AG04449 (cell line): ENCODE measurements at regions of chr3 and their contacts with region 1.

Region 1: DNA sequence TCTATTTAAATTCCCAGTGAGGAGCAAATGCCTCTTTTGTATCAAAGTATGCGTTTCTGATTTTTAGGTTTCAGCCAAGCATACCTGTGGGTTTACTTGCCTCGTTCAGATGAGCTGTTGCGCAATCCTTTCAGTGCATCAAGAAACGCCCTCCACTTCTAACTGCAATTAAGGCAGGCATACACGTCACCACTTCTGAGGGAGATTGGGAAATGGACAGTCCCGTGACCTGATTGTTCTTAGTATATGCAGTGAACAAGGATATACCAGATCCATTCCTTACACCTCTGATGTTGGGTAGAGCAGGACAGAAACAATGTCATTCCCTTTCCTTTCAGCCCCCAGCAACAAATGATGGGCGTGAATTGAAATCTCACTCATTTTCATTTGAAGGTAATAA is 219.0 kb downstream of the ITPR1 start:
- DNase-seq: no peak
- H3K4me3 ChIP-seq: no peak overlapping the region
- CTCF ChIP-seq: no peak

Region 2: GRCh38 chr3:4656059-4656458 is 56.1 kb before region 1 on chr3:
- CTCF ChIA-PET with region 1: interaction called, 14 read pairs
- POLR2A ChIA-PET with region 1: no interaction called
- DNase-seq: no peak
- H3K4me3 ChIP-seq: no peak overlapping the region
- CTCF ChIP-seq: peak; percentile 94

Region 3: GRCh38 chr3:4693620-4694019 is 18.5 kb before region 1 on chr3:
- CTCF ChIA-PET with region 1: interaction called, 20 read pairs
- POLR2A ChIA-PET with region 1: no interaction called
- DNase-seq: no peak
- H3K4me3 ChIP-seq: no peak overlapping the region
- CTCF ChIP-seq: no peak

Region 4: GRCh38 chr3:4826237-4827100 is 114.3 kb after region 1 on chr3:
- CTCF ChIA-PET with region 1: interaction called, 10 read pairs
- POLR2A ChIA-PET with region 1: no interaction called
- DNase-seq: no peak
- H3K4me3 ChIP-seq: no peak overlapping the region
- CTCF ChIP-seq: no peak

Region 5: DNA sequence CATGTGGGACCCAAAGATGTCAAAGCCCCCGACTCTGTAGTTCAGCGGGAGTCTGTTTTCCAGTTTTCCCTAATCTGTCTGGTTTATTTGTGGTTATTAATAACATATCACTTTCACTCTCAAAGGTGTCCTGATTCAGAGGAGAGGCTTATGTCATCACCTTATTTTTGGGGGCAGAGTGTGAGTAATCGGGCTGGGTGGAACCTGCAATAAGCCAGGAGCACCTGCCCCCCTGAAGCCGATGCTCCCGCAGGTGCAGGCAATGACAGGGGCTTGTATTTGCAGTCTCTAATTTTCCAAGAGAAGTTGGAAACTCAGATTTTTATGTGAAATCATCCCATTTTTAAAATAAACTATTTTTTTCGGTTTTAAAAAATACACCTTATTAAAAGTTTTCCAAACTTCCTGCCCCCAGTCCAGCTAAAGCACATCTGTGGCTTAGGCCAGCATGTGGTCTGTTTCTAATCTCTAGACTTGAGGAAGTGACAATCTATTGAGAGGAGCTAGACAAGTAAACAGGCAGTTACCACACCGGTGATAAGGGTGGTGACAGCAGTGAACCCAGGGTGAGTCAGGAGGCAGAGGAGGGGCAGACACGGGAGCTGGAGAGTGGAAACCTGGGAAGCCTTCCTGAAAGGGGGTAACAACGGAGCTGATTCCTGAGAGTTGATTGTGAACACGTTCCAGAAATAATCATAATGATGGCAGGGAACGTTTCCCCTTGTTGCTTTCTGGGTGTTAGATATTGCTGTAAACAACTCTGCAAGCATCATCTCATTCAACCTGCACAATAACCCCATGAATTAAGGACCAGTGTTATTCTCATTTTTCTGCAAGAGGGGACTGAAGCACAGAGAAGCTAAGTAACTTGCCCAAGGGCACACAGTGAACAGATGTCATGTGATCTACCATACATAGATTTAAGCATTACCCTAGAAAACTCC is 304.3 kb after region 1 on chr3:
- CTCF ChIA-PET with region 1: interaction called, 215 read pairs
- POLR2A ChIA-PET with region 1: no interaction called
- DNase-seq: no peak
- H3K4me3 ChIP-seq: no peak overlapping the region
- CTCF ChIP-seq: no peak

Region 6: GRCh38 chr3:5047764-5048163 is 335.6 kb after region 1 on chr3:
- CTCF ChIA-PET with region 1: interaction called, 416 read pairs
- POLR2A ChIA-PET with region 1: no interaction called
- DNase-seq: no peak
- H3K4me3 ChIP-seq: no peak overlapping the region
- CTCF ChIP-seq: no peak

Region 7: GRCh38 chr3:5212628-5213573 is 500.8 kb after region 1 on chr3:
- CTCF ChIA-PET with region 1: no interaction called
- POLR2A ChIA-PET with region 1: no interaction called
- DNase-seq: no peak
- H3K4me3 ChIP-seq: no peak overlapping the region
- CTCF ChIP-seq: no peak